GM12878 (cell line): ENCODE measurements at regions of chr4 and their contacts with region 1.

Region 1: GRCh38 chr4:174538123-174538875 is 16.0 kb upstream of the HPGD start:
- DNase-seq: peak; percentile 69
- ATAC-seq: peak; percentile 98
- H3K4me3 ChIP-seq: no peak overlapping the region
- H3K27ac ChIP-seq: no peak overlapping the region
- H3K4me1 ChIP-seq: peaks cover 10% of the 10 kb centered on the region
- H3K27me3 ChIP-seq: no peaks in the 10 kb centered on the region
- CTCF ChIP-seq: no peak
- EP300 ChIP-seq: peak; percentile 79 to 94; a peak in 3 of 4 replicates
- POLR2A ChIP-seq: no peak
- RAD21 ChIP-seq: no peak

Region 2: DNA sequence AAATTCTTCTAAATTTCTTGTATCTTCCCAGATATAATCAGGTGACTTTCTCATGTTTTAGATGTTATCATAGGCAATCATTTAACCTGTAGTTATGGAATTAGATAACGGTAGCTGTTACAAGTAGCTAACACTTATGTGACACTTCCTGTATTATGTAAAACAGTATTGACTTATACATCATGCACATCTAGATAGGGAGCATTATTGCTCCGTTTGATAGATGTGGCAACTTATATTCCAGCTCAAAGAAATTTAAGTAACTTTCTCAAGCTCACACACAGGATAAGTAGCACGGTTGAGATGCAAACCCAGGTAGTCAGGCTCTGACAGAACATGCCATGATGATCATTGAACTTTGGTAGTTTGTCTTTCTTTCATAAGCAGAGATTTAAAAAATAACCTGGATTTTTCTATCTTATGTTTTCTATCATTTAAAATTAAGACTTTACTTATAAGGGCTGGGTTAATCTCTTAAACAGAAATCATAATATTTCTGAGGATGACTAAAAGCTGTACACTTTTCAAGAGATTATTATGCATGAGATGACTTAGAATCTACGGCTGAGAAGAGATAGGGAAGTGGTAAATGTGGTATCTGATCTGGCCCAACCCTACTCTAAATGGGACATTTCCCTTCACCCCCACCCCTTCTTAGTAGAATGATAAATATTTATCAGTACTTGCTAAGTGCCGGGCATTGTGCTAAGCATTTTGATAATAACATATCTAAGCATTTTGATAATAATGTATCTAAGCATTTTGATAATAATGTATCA is 53.1 kb after region 1 on chr4:
- CTCF ChIA-PET with region 1: no interaction called
- POLR2A ChIA-PET with region 1: no interaction called
- RAD21 ChIA-PET with region 1: no interaction called
- SMC1A ChIA-PET with region 1: no interaction called
- in situ Hi-C with region 1: no loop called
- intact Hi-C with region 1: loop called (anchors 1 kb)
- DNase-seq: no peak
- ATAC-seq: peak; percentile 94
- H3K4me3 ChIP-seq: no peak overlapping the region
- H3K27ac ChIP-seq: no peak overlapping the region
- H3K4me1 ChIP-seq: no peaks in the 10 kb centered on the region
- H3K27me3 ChIP-seq: no peaks in the 10 kb centered on the region
- CTCF ChIP-seq: no peak
- EP300 ChIP-seq: no peak
- POLR2A ChIP-seq: no peak
- RAD21 ChIP-seq: no peak

Region 3: DNA sequence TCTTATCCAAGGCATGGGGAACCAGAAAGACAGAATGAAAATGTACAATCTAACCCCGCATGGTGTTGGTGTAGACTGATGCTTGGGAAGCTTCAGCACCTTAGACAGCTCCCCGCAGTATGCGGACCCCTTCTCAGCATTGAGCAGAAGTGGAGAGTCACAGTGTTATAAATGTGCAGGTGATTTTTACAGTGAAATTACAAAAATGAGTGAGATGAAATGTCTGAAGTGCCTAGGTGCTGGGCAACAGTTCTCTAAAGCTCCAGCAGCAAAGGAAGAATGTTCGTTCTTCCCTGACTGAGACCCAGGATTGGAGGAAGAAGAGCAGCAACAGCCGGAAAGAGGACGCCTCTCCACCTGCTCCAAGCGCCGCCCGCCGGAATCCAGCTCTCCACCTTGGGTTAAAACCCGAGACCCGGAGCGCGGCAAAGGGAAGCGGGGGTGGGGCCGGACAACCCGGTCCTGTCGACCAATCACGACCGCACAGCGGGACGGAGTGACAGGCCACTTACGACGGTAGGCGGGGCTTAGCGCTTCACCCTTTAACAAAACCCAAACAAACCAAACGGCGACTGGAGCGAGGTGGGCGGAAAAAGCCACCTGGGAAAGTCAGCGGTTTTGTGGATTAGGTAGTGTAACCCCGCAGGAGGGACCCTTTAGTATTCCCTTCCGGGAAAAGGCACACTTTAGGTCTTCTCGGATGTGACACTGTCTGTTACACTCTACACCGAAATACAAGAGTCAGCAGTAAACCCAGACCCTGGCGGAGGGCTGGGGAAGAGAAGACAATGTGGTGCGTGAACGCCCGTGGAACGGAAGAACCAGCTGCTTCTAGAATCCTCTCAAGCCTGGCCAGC is 290.8 kb after region 1 on chr4 and contains the start of gene GLRA3:
- CTCF ChIA-PET with region 1: no interaction called
- POLR2A ChIA-PET with region 1: no interaction called
- RAD21 ChIA-PET with region 1: no interaction called
- SMC1A ChIA-PET with region 1: no interaction called
- in situ Hi-C with region 1: no loop called
- intact Hi-C with region 1: no loop called
- DNase-seq: no peak
- ATAC-seq: peak; percentile 91
- H3K4me3 ChIP-seq: peak within 1 kb of the TSS; percentile 47; the same call in 1 of the 2 replicates
- H3K27ac ChIP-seq: no peak within 1 kb of the TSS
- H3K4me1 ChIP-seq: no peaks in the 10 kb centered on the region
- H3K27me3 ChIP-seq: no peaks in the 10 kb centered on the region
- CTCF ChIP-seq: no peak
- EP300 ChIP-seq: no peak
- POLR2A ChIP-seq: no peak
- RAD21 ChIP-seq: no peak
- polyA plus RNA-seq, gene GLRA3: not detected

Region 4: GRCh38 chr4:175308236-175308635 is 769.9 kb after region 1 on chr4:
- CTCF ChIA-PET with region 1: no interaction called
- POLR2A ChIA-PET with region 1: no interaction called
- RAD21 ChIA-PET with region 1: no interaction called
- SMC1A ChIA-PET with region 1: no interaction called
- in situ Hi-C with region 1: no loop called
- intact Hi-C with region 1: no loop called
- DNase-seq: no peak
- ATAC-seq: no peak
- H3K4me3 ChIP-seq: no peak overlapping the region
- H3K27ac ChIP-seq: no peak overlapping the region
- H3K4me1 ChIP-seq: no peaks in the 10 kb centered on the region
- H3K27me3 ChIP-seq: no peaks in the 10 kb centered on the region
- CTCF ChIP-seq: no peak
- EP300 ChIP-seq: no peak
- POLR2A ChIP-seq: no peak
- RAD21 ChIP-seq: no peak